T-cell (primary cell): ENCODE measurements at regions of chr14 and their contacts with region 1.

Region 1: DNA sequence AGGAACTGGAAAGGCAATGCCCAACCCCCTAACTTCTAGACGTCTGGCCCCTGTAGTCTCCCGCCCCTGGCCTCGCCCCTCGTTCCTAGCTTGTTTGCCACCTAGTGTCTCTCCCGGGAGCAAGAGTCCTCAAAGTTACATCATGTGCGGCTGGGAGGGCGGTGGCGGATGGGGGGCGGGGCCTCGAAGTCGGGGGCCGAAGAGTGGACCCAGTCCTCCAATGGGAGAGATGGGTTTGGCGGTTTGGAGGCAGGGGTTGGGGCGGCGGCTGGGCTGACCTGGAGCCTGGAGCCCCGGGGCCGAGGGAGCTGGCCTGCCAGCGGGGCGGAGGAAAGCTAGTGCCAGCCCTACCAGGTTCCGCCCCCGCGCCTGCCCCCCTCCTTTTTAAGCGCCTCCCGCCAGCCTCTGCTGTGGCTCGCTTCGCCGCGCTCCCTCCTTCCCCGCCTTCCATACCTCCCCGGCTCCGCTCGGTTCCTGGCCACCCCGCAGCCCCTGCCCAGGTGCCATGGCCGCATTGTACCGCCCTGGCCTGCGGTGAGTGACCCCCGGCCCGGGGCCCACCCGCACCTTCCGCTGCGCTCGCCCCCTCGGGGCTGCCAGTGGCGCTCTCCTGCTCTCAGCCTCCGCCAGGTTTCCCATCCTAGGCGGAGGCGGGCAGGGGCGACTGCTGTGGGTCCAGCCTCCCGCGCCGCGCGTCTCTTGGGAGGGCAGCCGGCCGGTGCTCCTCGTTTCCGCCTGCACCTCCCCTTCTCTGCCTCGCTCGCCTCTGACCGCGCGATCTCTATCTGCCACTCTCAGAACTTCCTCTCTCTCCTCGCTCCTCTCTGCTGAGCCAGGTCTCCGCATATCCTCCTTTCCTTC is at the start of gene PCK2:
- DNase-seq: peak; percentile 29 to 76 (median 60)
- ATAC-seq: peak; percentile 80 to 82 (median 80)
- H3K4me3 ChIP-seq: peak within 1 kb of the TSS; percentile 79 to 92
- H3K4me3 Mint-ChIP-seq: peak within 1 kb of the TSS; percentile 93 to 97 (median 96)
- H3K27ac ChIP-seq: peak within 1 kb of the TSS; percentile 83
- H3K27ac Mint-ChIP-seq: peak within 1 kb of the TSS; percentile 98
- H3K4me1 ChIP-seq: peaks cover 5 to 26% of the 10 kb centered on the region in 2 experiments
- H3K4me1 Mint-ChIP-seq: peaks cover 28 to 46% (median 39%) of the 10 kb centered on the region in 3 donors
- H3K27me3 ChIP-seq: no peaks in the 10 kb centered on the region
- H3K27me3 Mint-ChIP-seq: no peaks in the 10 kb centered on the region
- total RNA-seq, gene PCK2: 11.8 to 35.5 (median 29.4) TPM

Region 2: DNA sequence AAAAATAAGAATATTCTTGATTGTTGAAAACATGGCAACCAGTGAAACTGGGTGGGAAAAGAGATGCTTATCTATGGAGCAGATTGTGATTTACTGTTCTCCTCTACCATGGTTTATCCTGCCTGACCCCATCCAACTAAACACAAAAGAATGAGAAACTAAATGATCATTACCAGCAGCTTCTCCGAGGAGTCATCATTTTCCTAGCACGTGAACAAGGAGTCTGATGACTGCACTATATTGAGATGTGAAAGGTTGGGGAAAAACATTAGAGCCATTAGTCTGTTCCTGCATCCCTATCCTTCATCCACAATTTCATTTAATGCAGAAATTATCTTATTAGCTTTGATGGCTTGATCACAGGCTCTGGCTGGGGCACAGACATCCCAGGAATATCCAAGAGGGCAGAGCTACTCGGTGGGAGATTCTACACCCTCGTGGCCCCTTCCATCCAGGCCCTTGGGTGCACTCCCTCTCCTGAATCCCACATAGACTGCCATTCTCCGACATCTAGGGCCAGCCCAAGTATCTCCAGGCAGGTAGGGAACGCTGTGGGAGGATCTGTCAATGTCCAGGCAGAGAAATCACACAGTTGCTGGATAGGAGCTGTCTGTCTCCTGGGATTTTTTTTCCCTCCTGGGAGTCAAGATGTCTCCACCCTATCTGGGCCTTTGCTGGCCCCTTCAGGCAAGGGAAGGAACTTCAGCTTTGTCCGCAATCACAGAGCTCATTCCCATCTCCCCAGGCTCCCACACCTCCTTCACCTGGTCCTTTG is 183.8 kb before region 1 on chr14:
- CTCF ChIA-PET with region 1: no interaction called
- POLR2A ChIA-PET with region 1: no interaction called
- DNase-seq: peak in 5 of 35 experiments; percentile 3 to 30 (median 4)
- ATAC-seq: no peak
- H3K4me3 ChIP-seq: no peak overlapping the region
- H3K4me3 Mint-ChIP-seq: no peak overlapping the region
- H3K27ac ChIP-seq: no peak overlapping the region
- H3K27ac Mint-ChIP-seq: no peak overlapping the region
- H3K4me1 ChIP-seq: no peaks in the 10 kb centered on the region
- H3K4me1 Mint-ChIP-seq: no peaks in the 10 kb centered on the region
- H3K27me3 ChIP-seq: peaks cover 0 to 21% of the 10 kb centered on the region in 2 experiments
- H3K27me3 Mint-ChIP-seq: peaks cover 20 to 24% of the 10 kb centered on the region in 2 donors

Region 3: GRCh38 chr14:23984891-23985602 is 109.1 kb before region 1 on chr14:
- CTCF ChIA-PET with region 1: no interaction called
- POLR2A ChIA-PET with region 1: no interaction called
- DNase-seq: no peak
- ATAC-seq: no peak
- H3K4me3 ChIP-seq: no peak overlapping the region
- H3K4me3 Mint-ChIP-seq: no peak overlapping the region
- H3K27ac ChIP-seq: no peak overlapping the region
- H3K27ac Mint-ChIP-seq: no peak overlapping the region
- H3K4me1 ChIP-seq: peaks cover 3 to 19% of the 10 kb centered on the region in 2 experiments
- H3K4me1 Mint-ChIP-seq: peaks cover 22 to 32% (median 23%) of the 10 kb centered on the region in 3 donors
- H3K27me3 ChIP-seq: no peaks in the 10 kb centered on the region
- H3K27me3 Mint-ChIP-seq: no peaks in the 10 kb centered on the region

Region 4: DNA sequence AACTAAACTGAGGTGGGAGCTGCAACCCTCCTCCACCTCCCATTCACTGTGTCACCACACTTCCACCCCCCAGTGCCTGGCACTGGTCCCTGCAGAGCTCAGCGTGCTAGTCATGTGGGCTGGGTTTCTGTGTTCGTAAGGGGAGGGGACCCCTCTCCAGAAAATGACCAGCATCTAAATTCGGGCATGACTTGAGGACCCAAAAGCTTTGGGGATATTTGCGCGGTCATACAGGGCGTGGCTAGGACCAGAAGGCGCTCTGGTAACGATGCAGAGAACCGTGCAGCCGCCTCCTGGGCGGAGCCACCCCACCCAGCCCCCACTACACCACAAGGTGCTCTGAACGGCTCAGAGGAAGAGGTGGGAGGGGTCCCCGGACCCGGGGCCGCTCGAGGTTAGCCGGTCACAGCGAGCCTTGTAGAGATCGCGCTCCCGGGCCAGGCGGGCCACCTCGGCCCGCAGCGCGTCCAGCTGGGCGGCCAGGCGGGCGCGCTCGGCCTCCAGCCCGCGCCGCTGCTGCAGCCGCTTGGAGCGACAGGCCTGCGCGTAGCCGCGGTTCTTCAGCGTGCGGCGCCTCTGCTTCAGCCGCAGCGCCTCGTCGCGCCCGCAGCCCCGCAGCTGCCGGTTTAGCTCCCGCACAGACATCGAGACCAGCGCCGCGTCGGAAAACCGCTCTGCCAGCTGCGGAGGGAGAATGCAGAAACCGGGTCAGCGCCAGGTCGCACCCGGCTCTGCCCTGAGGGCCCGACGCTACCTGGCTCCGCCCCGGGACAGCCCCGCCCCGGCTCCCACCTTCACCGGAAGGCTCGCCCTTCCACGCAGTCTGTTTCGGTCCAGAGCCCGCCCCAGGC is 13.0 kb before region 1 on chr14:
- CTCF ChIA-PET with region 1: interaction called, 4 to 17 read pairs
- POLR2A ChIA-PET with region 1: interaction called in 1 of 2 experiments, 3 read pairs
- DNase-seq: peak; percentile 29 to 75 (median 58)
- ATAC-seq: peak; percentile 89 to 92 (median 90)
- H3K4me3 ChIP-seq: peak overlapping the region; percentile 62 to 75
- H3K4me3 Mint-ChIP-seq: peak overlapping the region; percentile 78 to 84 (median 81)
- H3K27ac ChIP-seq: peak overlapping the region; percentile 1
- H3K27ac Mint-ChIP-seq: peak overlapping the region; percentile 81 to 89
- H3K4me1 ChIP-seq: peaks cover 6 to 22% of the 10 kb centered on the region in 2 experiments
- H3K4me1 Mint-ChIP-seq: peaks cover 15 to 26% (median 16%) of the 10 kb centered on the region in 3 donors
- H3K27me3 ChIP-seq: no peaks in the 10 kb centered on the region
- H3K27me3 Mint-ChIP-seq: no peaks in the 10 kb centered on the region

Region 5: DNA sequence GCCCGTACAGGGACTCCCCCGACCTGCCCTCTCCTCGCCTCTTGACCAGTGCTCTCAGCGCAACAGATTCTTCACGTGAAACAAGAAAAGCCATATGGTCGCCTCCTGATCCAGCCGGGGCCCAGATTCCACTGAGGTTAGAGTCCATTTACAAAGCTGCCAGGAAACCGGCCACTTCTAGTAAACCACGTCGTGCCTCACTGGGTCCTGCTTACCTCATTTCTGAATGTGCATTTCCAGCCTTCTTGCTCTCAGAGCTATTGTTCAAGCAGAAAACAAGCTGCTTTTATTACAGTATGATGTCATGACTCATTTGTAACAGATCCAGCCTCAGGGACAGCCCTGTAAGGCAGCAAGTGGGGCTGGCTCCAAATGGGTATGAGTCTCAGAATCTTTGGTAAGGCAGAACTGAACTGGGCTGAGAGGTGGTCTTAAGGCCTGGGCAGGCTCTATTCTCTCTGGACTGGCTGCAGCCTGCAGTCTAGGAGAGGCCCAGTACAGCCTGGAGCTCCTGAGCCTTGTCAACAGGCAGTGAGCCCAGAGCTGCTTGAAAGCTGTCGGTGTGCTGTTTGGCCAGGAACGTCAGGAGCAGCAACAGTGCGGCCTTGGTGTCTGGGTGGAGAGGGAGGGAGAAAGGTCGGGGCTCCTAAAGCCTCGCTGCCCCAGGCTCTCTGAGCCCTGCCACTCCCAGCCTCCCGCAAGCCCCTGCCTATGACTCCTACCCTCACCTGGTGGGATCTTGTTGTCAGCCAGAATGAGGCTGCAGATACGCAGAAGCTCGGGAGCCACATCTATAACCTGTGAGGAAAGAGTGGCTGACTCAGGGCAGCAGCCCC is 86.0 kb after region 1 on chr14:
- CTCF ChIA-PET with region 1: no interaction called
- POLR2A ChIA-PET with region 1: no interaction called
- DNase-seq: no peak
- ATAC-seq: no peak
- H3K4me3 ChIP-seq: no peak overlapping the region
- H3K4me3 Mint-ChIP-seq: no peak overlapping the region
- H3K27ac ChIP-seq: no peak overlapping the region
- H3K27ac Mint-ChIP-seq: peak overlapping the region; percentile 63 to 77
- H3K4me1 ChIP-seq: no peaks in the 10 kb centered on the region
- H3K4me1 Mint-ChIP-seq: peaks cover 0 to 2% (median 0%) of the 10 kb centered on the region in 3 donors
- H3K27me3 ChIP-seq: no peaks in the 10 kb centered on the region
- H3K27me3 Mint-ChIP-seq: no peaks in the 10 kb centered on the region